ENCODE measurements at regions of chr22 and their contacts with region 1.

Region 1: GRCh38 chr22:40636380-40637182 is at the start of gene MRTFA:
- DNase-seq: peak; percentile 95
- ATAC-seq: peak; percentile 93
- H3K4me3 Mint-ChIP-seq: peak within 1 kb of the TSS; percentile 98
- H3K27ac Mint-ChIP-seq: peak within 1 kb of the TSS; percentile 95
- H3K4me1 Mint-ChIP-seq: peaks cover 45% of the 10 kb centered on the region
- H3K27me3 Mint-ChIP-seq: no peaks in the 10 kb centered on the region
- CTCF ChIP-seq: no peak
- total RNA-seq, gene MRTFA: 99.4 and 115 TPM in 2 replicates

Region 2: GRCh38 chr22:40177738-40178416 is 458.7 kb before region 1 on chr22 and contains the start of gene TNRC6B:
- CTCF ChIA-PET with region 1: no interaction called
- POLR2A ChIA-PET with region 1: no interaction called
- intact Hi-C with region 1: loop called (anchors 1 kb)
- DNase-seq: peak; percentile 24
- ATAC-seq: peak; percentile 86
- H3K4me3 Mint-ChIP-seq: peak within 1 kb of the TSS; percentile 87
- H3K27ac Mint-ChIP-seq: peak within 1 kb of the TSS; percentile 87
- H3K4me1 Mint-ChIP-seq: peaks cover 60% of the 10 kb centered on the region
- H3K27me3 Mint-ChIP-seq: no peaks in the 10 kb centered on the region
- CTCF ChIP-seq: no peak
- total RNA-seq, gene TNRC6B: 84.6 and 95.2 TPM in 2 replicates

Region 3: GRCh38 chr22:40487663-40488249 is 148.8 kb before region 1 on chr22:
- CTCF ChIA-PET with region 1: no interaction called
- POLR2A ChIA-PET with region 1: interaction called, 3 read pairs
- intact Hi-C with region 1: loop called (anchors 1 kb)
- DNase-seq: no peak
- ATAC-seq: no peak
- H3K4me3 Mint-ChIP-seq: no peak overlapping the region
- H3K27ac Mint-ChIP-seq: peak overlapping the region; percentile 5
- H3K4me1 Mint-ChIP-seq: peaks cover 35% of the 10 kb centered on the region
- H3K27me3 Mint-ChIP-seq: no peaks in the 10 kb centered on the region
- CTCF ChIP-seq: peak; percentile 53

Region 4: DNA sequence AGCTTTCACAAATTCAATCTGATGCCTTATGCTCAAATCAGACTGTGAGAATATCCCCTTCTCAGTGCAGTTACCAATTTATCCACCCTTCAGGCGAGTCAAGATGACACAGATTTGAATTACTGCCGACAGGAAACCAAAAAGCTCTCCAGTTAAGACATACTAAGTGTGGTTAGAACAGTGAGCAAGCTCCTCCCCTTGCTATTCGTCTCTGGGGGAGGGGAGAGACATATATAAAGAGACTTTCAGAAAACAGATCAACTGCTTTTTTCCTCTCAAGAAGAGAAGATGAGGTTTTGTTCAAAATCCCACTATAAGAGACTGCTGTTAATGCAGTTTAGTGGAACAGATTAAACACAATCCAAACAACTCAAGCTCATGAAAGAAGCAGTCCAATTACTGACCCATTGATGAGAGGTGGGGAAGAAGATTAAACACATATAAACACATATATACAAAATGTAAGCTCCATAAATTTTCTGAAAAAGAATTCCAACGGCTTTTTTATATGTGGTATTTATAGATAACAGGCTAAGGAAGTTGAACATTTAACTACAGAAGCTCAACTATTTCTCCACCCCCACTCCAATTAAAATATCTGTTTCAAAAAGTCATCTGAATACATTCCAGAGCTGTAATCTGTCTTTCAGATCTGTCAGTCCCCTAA is 102.7 kb before region 1 on chr22:
- CTCF ChIA-PET with region 1: no interaction called
- POLR2A ChIA-PET with region 1: interaction called, 15 read pairs
- intact Hi-C with region 1: no loop called
- DNase-seq: no peak
- ATAC-seq: peak; percentile 96
- H3K4me3 Mint-ChIP-seq: peak overlapping the region; percentile 75
- H3K27ac Mint-ChIP-seq: peak overlapping the region; percentile 83
- H3K4me1 Mint-ChIP-seq: peaks cover 61% of the 10 kb centered on the region
- H3K27me3 Mint-ChIP-seq: no peaks in the 10 kb centered on the region
- CTCF ChIP-seq: no peak

Region 5: GRCh38 chr22:40620464-40621046 is 16.0 kb before region 1 on chr22:
- CTCF ChIA-PET with region 1: no interaction called
- POLR2A ChIA-PET with region 1: interaction called, 12 read pairs
- intact Hi-C with region 1: no loop called
- DNase-seq: no peak
- ATAC-seq: no peak
- H3K4me3 Mint-ChIP-seq: no peak overlapping the region
- H3K27ac Mint-ChIP-seq: no peak overlapping the region
- H3K4me1 Mint-ChIP-seq: peaks cover 30% of the 10 kb centered on the region
- H3K27me3 Mint-ChIP-seq: no peaks in the 10 kb centered on the region
- CTCF ChIP-seq: no peak

Region 6: DNA sequence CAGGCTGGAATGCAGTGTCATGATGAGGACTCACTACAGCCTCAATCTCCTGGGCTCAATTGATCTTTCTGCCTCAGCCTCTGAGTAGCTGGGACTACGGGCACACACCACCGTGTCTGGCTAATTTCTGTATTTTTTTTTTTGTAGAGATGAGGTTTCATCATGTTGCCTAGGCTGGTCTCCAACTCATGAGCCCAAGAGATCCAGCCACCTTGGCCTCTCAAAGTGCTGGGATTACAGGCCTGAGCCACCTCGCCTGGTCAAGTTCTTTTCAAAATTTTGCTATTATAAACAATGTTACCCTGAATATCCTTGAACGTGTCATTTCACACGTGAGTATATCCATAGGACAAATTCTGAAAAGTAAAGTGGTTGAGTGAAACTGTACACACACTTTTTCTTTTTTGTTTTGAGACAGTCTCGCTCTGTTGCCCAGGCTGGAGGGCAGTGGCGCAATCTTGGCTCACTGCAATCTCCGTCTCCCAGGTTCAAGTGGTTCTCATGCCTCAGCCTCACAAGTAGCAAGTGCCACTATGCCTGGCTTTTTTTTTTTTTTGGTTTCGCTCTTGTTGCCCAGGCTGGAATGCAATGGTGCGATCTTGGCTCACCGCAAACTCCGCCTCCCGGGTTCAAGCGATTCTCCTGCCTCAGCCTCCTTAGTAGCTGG is 434.2 kb after region 1 on chr22:
- CTCF ChIA-PET with region 1: no interaction called
- POLR2A ChIA-PET with region 1: no interaction called
- intact Hi-C with region 1: loop called (anchors 5 kb)
- DNase-seq: no peak
- ATAC-seq: no peak
- H3K4me3 Mint-ChIP-seq: no peak overlapping the region
- H3K27ac Mint-ChIP-seq: no peak overlapping the region
- H3K4me1 Mint-ChIP-seq: peaks cover 33% of the 10 kb centered on the region
- H3K27me3 Mint-ChIP-seq: no peaks in the 10 kb centered on the region
- CTCF ChIP-seq: no peak